Dendritic cell treated with granulocyte-macrophage colony-stimulating factor and Interleukin-4, amounts not matched to agents 40 ng/mL and 50 ng/mL, for 4 days (primary cell): ENCODE measurements at regions of chr20 and their contacts with region 1.

Region 1: GRCh38 chr20:49999329-49999728 is 16.5 kb downstream of the SNAI1 start:
- H3K4me3 Mint-ChIP-seq: no peak overlapping the region
- H3K27ac Mint-ChIP-seq: no peak overlapping the region
- H3K4me1 Mint-ChIP-seq: peaks cover 30% of the 10 kb centered on the region
- H3K27me3 Mint-ChIP-seq: no peaks in the 10 kb centered on the region

Region 2: GRCh38 chr20:50054626-50055511 is 55.5 kb after region 1 on chr20:
- intact Hi-C with region 1: loop called (anchors 5 kb)
- H3K4me3 Mint-ChIP-seq: no peak overlapping the region
- H3K27ac Mint-ChIP-seq: no peak overlapping the region
- H3K4me1 Mint-ChIP-seq: peaks cover 26% of the 10 kb centered on the region
- H3K27me3 Mint-ChIP-seq: peaks cover 10% of the 10 kb centered on the region

Region 3: GRCh38 chr20:50087229-50087821 is 88.0 kb after region 1 on chr20:
- intact Hi-C with region 1: no loop called
- H3K4me3 Mint-ChIP-seq: no peak overlapping the region
- H3K27ac Mint-ChIP-seq: no peak overlapping the region
- H3K4me1 Mint-ChIP-seq: peaks cover 29% of the 10 kb centered on the region
- H3K27me3 Mint-ChIP-seq: no peaks in the 10 kb centered on the region